Body of pancreas (tissue), 4 donors: ENCODE measurements at regions of chr10 and their contacts with region 1.

Region 1: DNA sequence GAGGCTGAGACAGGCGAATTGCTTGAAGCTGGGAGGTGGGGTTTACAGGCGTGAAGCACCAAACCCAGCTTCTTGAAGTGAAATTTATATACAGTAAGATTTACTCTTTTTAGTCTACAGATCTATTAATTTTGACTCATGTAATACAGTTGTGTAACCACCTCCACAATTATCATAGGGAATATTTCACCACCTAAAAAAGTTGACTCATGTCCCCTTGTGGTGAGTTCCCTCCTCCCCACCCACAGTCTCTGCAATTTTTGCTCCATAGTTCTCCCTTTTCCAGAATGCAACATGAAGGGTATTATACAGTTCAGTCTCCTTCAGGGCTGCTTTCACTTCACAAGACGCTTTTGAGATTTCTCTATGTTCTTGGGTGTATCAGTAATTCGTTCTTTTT is 156.8 kb downstream of the FAM107B start:
- DNase-seq: no peak
- ATAC-seq: no peak
- H3K4me3 ChIP-seq: no peak overlapping the region
- H3K27ac ChIP-seq: no peak overlapping the region
- H3K4me1 ChIP-seq: peaks cover 8% of the 10 kb centered on the region
- H3K27me3 ChIP-seq: no peaks in the 10 kb centered on the region
- CTCF ChIP-seq: peak in 1 of 7 experiments; percentile 18
- POLR2A ChIP-seq: no peak

Region 2: DNA sequence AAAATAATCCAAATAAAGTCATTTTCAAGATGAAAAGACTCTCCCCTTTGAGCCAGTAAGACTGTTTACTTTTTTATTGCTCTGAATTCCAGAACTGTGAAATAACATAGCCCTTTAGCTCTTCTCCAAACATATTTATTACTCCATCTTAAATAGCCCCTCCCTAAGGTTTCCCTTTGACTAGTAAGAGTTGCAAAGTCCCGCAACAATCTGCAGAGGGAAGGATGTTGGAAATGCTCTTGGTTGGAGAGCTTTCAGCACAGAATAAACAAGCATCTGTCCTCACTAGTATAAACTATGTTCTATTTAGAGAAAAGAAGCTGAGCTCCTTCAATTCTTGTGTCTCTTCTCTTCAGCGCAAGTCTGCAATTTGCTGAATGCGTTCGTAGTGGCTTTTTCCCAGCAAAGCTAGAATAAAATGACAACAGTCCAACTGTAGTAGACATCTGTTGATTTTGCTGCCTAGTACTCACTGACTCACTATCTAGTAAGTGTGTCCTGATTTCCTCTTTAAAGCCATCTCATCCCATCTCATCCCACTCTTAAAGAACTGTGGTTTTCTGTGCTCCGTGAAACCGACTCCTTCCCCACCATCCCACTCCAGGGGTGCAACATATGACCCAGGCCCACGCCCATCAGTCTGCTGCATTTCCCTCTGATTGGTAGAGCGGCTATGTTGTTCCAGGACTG is 52.8 kb after region 1 on chr10:
- intact Hi-C with region 1: loop called (anchors 10 kb)
- DNase-seq: no peak
- ATAC-seq: no peak
- H3K4me3 ChIP-seq: no peak overlapping the region
- H3K27ac ChIP-seq: no peak overlapping the region
- H3K4me1 ChIP-seq: peaks cover 26% of the 10 kb centered on the region
- H3K27me3 ChIP-seq: no peaks in the 10 kb centered on the region
- CTCF ChIP-seq: no peak
- POLR2A ChIP-seq: no peak

Region 3: DNA sequence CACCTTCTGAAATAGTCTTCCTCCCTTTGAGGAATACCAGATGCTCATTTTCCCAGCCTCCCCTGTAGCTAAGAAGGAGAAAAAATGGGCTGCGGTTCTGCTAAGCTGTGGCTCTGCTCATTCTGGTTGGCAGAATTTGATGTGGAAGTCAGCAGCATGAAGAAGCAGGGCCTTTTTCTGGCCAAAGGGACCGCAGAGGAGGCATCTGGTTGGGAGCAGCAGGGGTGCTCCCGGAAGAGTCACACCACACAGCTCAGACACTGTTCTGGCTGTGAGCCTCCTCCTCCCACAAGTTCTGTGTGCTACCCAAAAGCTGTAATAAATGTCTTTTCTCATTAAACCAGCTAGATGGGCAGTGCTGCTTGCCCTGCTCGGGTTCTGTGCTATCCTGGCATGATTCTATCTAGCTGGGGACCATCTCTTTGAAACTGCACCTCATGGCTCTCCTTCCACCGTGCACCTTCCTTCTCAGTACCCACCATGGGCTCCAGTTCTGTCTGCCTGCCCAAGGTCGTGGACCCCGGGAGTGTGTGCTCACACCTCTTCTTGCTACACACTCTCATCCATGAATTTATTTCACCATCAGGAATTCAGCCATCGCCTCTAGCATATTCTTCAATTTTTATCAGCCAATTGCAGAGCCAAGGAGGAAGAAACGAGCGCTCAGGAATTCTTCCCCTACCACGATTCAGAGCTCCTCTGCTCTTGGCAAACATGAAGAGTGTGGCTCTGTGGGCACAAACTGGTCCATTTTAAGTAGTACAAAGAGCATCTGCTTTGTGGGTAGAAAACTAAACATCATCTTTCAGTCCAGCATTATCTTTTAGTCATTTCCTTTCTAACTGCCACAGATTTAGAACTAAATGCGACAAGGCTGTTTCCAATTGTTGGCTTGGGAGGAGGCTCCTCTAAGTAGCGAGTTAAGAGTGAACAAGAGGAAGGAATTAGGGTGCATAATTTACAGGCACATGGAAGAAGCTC is 676.3 kb after region 1 on chr10:
- intact Hi-C with region 1: no loop called
- DNase-seq: no peak
- ATAC-seq: no peak
- H3K4me3 ChIP-seq: no peak overlapping the region
- H3K27ac ChIP-seq: peak overlapping the region in 1 of 4 donors; percentile 5
- H3K4me1 ChIP-seq: peaks cover 7% of the 10 kb centered on the region
- H3K27me3 ChIP-seq: no peaks in the 10 kb centered on the region
- CTCF ChIP-seq: no peak
- POLR2A ChIP-seq: no peak